ENCODE measurements at regions of chr16 and their contacts with region 1.

Region 1: GRCh38 chr16:74709441-74709877 is 8.8 kb upstream of the MLKL start:
- DNase-seq: peak; percentile 95
- H3K4me3 ChIP-seq: no peak overlapping the region
- H3K27ac ChIP-seq: peak overlapping the region in 4 of 8 donors; percentile 29 to 71 (median 46)
- H3K4me1 ChIP-seq: peaks cover 0 to 13% (median 4%) of the 10 kb centered on the region in 6 donors
- H3K27me3 ChIP-seq: no peaks in the 10 kb centered on the region
- CTCF ChIP-seq: peak; percentile 85 to 97 (median 96)
- POLR2A ChIP-seq: no peak

Region 2: DNA sequence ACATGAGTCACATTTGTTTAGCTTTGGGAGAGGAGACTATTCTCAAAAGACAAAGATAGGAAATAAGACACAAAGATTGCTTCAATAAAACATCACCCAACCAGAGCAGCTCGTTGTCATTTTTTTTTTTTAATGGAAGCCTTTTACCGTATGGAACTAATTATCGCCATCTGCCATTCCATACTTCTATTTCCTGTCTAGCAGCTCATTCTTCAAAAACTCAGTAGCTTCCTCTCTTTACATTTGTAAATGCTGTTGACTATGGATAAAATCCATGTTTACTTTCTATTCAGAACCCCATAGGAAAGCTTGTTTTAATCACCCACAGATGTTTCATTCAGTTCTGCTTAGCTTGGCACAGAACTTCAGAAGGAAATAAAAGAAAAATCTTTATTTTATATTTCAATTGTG is 522.9 kb before region 1 on chr16:
- intact Hi-C with region 1: no loop called
- DNase-seq: no peak
- H3K4me3 ChIP-seq: no peak overlapping the region
- H3K27ac ChIP-seq: no peak overlapping the region
- H3K4me1 ChIP-seq: no peaks in the 10 kb centered on the region
- H3K27me3 ChIP-seq: no peaks in the 10 kb centered on the region
- CTCF ChIP-seq: no peak
- POLR2A ChIP-seq: no peak

Region 3: DNA sequence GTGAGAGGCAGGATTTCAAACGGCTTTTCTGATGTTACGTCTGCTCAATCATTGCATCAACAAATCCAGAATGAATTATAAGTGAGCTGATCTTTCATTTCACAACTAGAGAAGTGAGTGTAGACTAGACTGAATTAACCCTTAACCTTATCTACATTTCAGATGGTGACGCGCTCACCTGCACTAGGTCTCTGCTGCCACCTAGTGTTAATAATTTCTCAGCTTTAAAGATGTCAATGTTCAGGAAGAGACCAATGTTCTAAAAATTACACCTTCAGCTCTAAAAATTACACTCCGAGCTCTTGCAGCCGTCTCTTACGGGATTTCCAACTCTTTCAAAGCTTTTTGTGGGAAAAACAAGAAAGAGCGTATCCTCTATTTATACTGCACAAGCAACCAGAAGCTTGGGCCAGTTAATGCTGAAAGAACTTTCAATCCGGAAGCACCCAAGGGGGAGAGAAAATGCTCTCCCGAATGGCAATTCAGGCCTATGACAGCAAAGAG is 153.3 kb after region 1 on chr16:
- intact Hi-C with region 1: loop called (anchors 5 kb)
- DNase-seq: no peak
- H3K4me3 ChIP-seq: no peak overlapping the region
- H3K27ac ChIP-seq: no peak overlapping the region
- H3K4me1 ChIP-seq: peaks cover 0 to 10% (median 7%) of the 10 kb centered on the region in 6 donors
- H3K27me3 ChIP-seq: no peaks in the 10 kb centered on the region
- CTCF ChIP-seq: peak; percentile 11 to 71 (median 55)
- POLR2A ChIP-seq: no peak

Measured in spleen (tissue), 13 donors.